ENCODE measurements at regions of chr1 and their contacts with region 1.

Region 1: GRCh38 chr1:28668191-28668955 is at the start of gene GMEB1:
- DNase-seq: peak; percentile 80 to 91 (median 89)
- H3K4me3 ChIP-seq: peak within 1 kb of the TSS; percentile 74 to 94 (median 91)
- H3K27ac ChIP-seq: peak within 1 kb of the TSS; percentile 90 to 97
- H3K4me1 ChIP-seq: peaks cover 10 to 19% (median 15%) of the 10 kb centered on the region in 4 experiments
- H3K27me3 ChIP-seq: no peaks in the 10 kb centered on the region

Region 2: DNA sequence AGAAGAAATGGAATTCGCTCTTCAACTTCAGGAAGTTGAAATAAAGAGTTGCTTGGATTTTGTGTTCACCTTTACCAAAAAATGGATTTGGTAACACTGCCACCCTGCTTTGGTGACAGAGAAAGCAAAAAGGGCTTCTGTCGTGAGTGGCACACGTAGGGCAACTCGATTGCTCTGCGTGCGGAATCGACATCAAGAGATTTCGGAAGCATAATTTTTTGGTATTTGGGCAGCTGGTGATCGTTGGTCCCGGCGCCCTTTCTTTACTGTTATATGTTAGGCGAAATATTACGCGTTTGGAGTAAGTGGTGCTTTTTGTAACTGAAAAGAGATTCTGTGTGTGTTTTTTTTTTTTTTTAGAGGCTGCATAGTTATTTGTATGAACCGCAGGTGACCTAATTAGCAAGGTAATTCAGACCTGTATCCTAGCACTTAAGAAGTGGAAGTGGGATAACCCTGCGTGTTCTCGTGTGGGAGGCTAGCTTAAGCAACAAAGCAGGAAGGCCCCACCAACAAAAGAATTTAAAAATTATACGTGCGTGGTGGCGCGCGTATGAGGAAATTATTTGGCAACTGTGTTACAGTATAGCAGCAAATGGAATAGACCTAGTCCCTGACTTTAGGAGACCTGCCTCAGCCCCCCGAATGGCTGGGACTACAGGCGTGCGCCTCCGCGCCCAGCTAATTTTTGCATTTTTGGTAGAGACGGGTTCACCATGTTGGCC is 19.7 kb before region 1 on chr1 and contains the start of gene RNU11:
- CTCF ChIA-PET with region 1: interaction called, 3 read pairs
- POLR2A ChIA-PET with region 1: interaction called, 29 read pairs
- DNase-seq: peak; percentile 98 to 99 (median 99)
- H3K4me3 ChIP-seq: peak within 1 kb of the TSS; percentile 7 to 79 (median 57)
- H3K27ac ChIP-seq: peak within 1 kb of the TSS; percentile 100
- H3K4me1 ChIP-seq: peaks cover 4 to 30% (median 24%) of the 10 kb centered on the region in 4 experiments
- H3K27me3 ChIP-seq: no peaks in the 10 kb centered on the region